Sigmoid colon (tissue), 7 donors: ENCODE measurements at regions of chr5 and their contacts with region 1.

Region 1: DNA sequence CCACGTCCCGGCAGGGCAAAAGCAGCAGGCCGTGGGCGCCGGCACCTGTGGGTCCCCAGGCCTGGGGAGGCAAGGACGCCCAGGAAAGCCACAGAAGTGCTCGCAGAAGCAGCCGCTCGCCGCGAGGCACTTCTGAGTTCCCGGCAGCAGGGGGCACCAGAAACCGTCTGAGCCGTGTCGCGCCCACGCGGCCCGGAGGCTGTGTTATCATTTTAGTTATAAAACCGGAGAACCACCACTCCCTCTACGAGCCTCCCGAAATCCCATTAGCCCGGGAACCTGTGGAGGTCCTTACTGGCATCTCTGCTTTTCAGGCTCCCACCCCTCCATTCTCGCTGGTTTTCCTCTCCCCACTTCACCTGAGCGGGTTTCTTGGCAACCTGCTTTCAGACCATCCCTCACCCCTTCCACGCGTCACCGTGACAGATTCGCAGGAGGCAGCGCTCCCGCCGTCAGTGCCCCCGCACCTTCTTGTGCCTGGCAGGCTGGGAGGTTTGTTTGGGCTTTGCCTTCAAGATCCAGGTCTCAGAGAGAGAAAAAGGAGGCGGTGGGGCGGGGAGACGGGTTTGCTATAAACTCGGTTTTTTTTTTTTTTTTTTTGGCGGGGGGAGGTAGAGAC is 2.3 kb downstream of the GDNF start:
- DNase-seq: peak; percentile 91
- H3K4me3 ChIP-seq: peak overlapping the region; percentile 66 to 86 (median 73)
- H3K27ac ChIP-seq: peak overlapping the region; percentile 85 to 97 (median 95)
- H3K4me1 ChIP-seq: peaks cover 0 to 59% (median 42%) of the 10 kb centered on the region in 4 donors
- H3K27me3 ChIP-seq: peaks cover 0 to 6% (median 3%) of the 10 kb centered on the region in 3 donors
- CTCF ChIP-seq: peak; percentile 82 to 92 (median 84)
- EP300 ChIP-seq: no peak
- POLR2A ChIP-seq: no peak

Region 2: GRCh38 chr5:37412515-37413277 is 424.8 kb before region 1 on chr5:
- intact Hi-C with region 1: loop called (anchors 2 kb)
- DNase-seq: peak; percentile 74
- H3K4me3 ChIP-seq: no peak overlapping the region
- H3K27ac ChIP-seq: no peak overlapping the region
- H3K4me1 ChIP-seq: peaks cover 0 to 4% (median 0%) of the 10 kb centered on the region in 4 donors
- H3K27me3 ChIP-seq: no peaks in the 10 kb centered on the region
- CTCF ChIP-seq: peak; percentile 88 to 97 (median 90)
- EP300 ChIP-seq: no peak
- POLR2A ChIP-seq: no peak

Region 3: DNA sequence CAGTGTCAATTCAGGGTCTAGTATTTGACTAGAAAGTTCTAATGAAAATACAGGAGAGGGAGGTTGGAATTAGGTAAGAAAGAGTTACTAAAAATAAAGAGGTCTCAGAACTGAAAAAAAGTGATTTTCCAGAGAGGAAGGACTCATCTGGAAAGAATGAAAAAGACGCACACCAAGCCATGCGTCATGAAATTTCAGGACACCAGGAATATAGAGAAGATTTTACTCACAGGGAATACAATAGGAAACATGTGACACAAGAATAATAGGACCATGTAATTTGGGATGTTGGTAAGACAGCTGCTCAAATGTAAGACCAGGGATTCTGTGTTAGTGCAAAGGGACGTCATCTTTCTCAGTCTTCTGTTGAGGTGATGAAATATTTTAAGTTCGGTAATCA is 222.3 kb before region 1 on chr5:
- intact Hi-C with region 1: loop called (anchors 5 kb)
- DNase-seq: no peak
- H3K4me3 ChIP-seq: no peak overlapping the region
- H3K27ac ChIP-seq: peak overlapping the region; percentile 53 to 83 (median 73)
- H3K4me1 ChIP-seq: peaks cover 0 to 28% (median 17%) of the 10 kb centered on the region in 4 donors
- H3K27me3 ChIP-seq: no peaks in the 10 kb centered on the region
- CTCF ChIP-seq: no peak
- EP300 ChIP-seq: peak; percentile 36 to 90 (median 66)
- POLR2A ChIP-seq: no peak

Region 4: GRCh38 chr5:37631939-37632338 is 205.6 kb before region 1 on chr5:
- intact Hi-C with region 1: no loop called
- DNase-seq: no peak
- H3K4me3 ChIP-seq: no peak overlapping the region
- H3K27ac ChIP-seq: no peak overlapping the region
- H3K4me1 ChIP-seq: no peaks in the 10 kb centered on the region
- H3K27me3 ChIP-seq: no peaks in the 10 kb centered on the region
- CTCF ChIP-seq: no peak
- EP300 ChIP-seq: no peak
- POLR2A ChIP-seq: no peak

Region 5: DNA sequence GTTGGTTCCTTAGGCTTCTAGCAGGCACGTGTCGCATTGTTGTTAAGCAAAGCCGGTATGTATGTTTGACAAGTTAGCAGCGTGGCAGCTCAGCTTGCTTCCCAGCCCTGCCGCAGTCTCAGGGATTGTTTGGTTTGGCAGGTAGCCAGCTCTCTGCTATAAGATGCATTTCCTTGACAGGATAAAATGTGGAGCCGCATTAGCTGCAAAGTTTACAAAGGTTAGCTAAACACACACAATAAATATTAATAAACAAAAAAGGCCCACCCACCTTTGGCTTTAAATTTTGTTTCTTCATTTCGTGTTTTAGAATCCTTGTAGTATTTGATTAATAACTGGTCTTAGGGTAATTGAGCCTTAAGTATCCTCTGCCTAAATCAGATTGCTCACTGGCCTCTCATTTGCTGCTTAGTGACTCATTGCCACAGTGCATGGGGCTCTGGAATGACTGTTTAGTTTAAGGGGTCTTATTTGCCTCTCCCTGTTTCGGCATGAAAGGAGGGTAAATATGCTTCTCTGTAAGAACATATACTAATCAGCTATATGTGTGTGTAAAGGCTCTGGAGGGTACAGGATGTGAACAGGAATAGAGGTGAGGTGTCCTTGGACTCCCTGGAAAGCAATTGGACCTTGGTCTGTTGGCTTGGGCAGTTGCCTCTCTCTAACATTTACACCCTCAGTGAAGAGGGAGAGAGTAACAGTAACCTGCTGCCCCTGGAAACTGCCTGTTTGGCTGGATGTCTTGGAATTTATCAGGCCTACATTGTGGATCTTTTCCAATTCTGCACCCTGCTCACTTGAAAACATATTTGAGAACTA is 119.7 kb before region 1 on chr5:
- intact Hi-C with region 1: loop called (anchors 5 kb)
- DNase-seq: peak; percentile 66
- H3K4me3 ChIP-seq: no peak overlapping the region
- H3K27ac ChIP-seq: peak overlapping the region; percentile 46 to 76 (median 60)
- H3K4me1 ChIP-seq: peaks cover 0 to 50% (median 23%) of the 10 kb centered on the region in 4 donors
- H3K27me3 ChIP-seq: no peaks in the 10 kb centered on the region
- CTCF ChIP-seq: no peak
- EP300 ChIP-seq: no peak
- POLR2A ChIP-seq: no peak

Region 6: DNA sequence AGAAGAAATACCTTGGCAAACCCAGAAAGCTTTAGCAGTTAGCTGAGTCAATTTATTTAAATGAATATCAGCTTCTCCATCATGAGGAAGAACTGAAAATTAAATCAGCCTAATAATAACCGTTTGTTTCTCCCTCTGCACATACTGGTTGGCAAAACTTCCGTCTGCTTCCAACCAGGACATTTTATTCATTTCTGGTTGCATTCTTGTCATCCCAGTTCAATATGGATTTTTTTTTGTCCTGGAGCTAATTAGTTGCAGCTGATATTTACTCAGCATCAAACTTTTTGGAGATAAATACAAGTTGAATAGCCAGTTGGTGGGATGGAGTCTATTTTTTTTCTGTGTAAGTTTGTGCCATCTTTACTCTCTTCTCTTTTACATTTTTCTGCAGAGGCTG is 128.8 kb after region 1 on chr5:
- intact Hi-C with region 1: no loop called
- DNase-seq: no peak
- H3K4me3 ChIP-seq: no peak overlapping the region
- H3K27ac ChIP-seq: no peak overlapping the region
- H3K4me1 ChIP-seq: peaks cover 0 to 5% (median 0%) of the 10 kb centered on the region in 4 donors
- H3K27me3 ChIP-seq: no peaks in the 10 kb centered on the region
- CTCF ChIP-seq: no peak
- EP300 ChIP-seq: no peak
- POLR2A ChIP-seq: no peak

Region 7: GRCh38 chr5:38193015-38193581 is 355.6 kb after region 1 on chr5:
- intact Hi-C with region 1: loop called (anchors 1 kb)
- DNase-seq: peak; percentile 81
- H3K4me3 ChIP-seq: no peak overlapping the region
- H3K27ac ChIP-seq: no peak overlapping the region
- H3K4me1 ChIP-seq: peaks cover 0 to 9% (median 2%) of the 10 kb centered on the region in 4 donors
- H3K27me3 ChIP-seq: no peaks in the 10 kb centered on the region
- CTCF ChIP-seq: peak; percentile 81 to 89 (median 86)
- EP300 ChIP-seq: no peak
- POLR2A ChIP-seq: no peak